ENCODE measurements at regions of chr22 and their contacts with region 1.

Region 1: GRCh38 chr22:32649515-32650200 is 151.8 kb upstream of the TIMP3 start:
- DNase-seq: peak; percentile 31
- H3K4me3 ChIP-seq: no peak overlapping the region
- H3K27ac ChIP-seq: peak overlapping the region; percentile 31 to 54 (median 40)
- H3K4me1 ChIP-seq: peaks cover 0 to 2% (median 0%) of the 10 kb centered on the region in 4 donors
- H3K27me3 ChIP-seq: no peaks in the 10 kb centered on the region
- CTCF ChIP-seq: no peak
- EP300 ChIP-seq: no peak
- POLR2A ChIP-seq: no peak

Region 2: GRCh38 chr22:32991353-32992121 is 341.9 kb after region 1 on chr22:
- in situ Hi-C with region 1: loop called in 2 of 4 experiments (anchors 10 to 25 kb)
- intact Hi-C with region 1: no loop called
- DNase-seq: no peak
- H3K4me3 ChIP-seq: no peak overlapping the region
- H3K27ac ChIP-seq: no peak overlapping the region
- H3K4me1 ChIP-seq: no peaks in the 10 kb centered on the region
- H3K27me3 ChIP-seq: no peaks in the 10 kb centered on the region
- CTCF ChIP-seq: no peak
- EP300 ChIP-seq: no peak
- POLR2A ChIP-seq: no peak